WTC11 (cell line): ENCODE measurements at regions of chr22 and their contacts with region 1.

Region 1: DNA sequence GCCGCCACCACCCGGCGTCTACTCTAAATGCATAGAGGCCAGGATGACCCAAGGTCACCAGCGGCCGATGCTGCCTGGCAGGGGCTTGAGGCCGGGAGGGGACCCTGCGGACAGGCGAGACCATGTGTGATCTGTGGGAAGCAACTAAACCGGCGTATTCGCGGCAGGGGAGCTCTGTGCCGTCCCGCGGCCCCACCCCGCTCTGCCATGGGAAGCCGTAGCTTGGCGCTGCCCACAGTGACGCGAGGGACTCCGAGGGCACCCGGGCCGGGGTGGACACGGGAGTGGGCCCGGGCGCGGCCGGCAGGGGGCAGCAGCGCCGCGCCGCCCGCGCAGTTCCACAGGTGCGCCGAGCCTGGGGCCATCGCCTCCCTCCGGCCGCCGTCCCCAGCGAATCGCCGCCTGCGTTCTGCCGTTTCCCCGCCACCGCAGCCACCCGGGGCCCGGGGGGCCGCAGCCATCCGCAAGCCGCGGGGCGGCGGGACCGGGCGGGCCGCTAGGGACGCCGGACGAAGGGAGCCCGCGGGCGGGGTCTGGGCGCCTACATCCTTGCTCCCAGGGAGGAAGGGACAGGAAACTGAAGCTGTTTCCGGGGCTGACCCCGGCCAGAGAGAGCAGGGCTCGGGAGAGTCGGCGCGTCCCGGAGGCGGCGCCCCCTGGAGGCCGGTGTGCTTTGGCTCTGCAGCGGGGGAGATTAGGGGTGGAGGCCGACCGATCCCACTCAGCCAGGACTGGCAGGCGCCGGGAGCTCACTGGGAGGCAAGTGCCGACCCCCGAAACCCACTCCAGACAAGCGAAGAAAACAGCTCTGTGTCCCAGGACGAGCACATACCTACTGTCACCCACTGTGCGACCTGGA is 12.5 kb upstream of the HDHD5 start:
- DNase-seq: peak; percentile 95
- ATAC-seq: peak; percentile 85
- H3K4me3 Mint-ChIP-seq: peak overlapping the region; percentile 67
- H3K27ac Mint-ChIP-seq: peak overlapping the region; percentile 96
- H3K4me1 Mint-ChIP-seq: peaks cover 19% of the 10 kb centered on the region
- H3K27me3 Mint-ChIP-seq: peaks cover 3% of the 10 kb centered on the region; the same call in 1 of the 2 replicates
- CTCF ChIP-seq: peak; percentile 94

Region 2: DNA sequence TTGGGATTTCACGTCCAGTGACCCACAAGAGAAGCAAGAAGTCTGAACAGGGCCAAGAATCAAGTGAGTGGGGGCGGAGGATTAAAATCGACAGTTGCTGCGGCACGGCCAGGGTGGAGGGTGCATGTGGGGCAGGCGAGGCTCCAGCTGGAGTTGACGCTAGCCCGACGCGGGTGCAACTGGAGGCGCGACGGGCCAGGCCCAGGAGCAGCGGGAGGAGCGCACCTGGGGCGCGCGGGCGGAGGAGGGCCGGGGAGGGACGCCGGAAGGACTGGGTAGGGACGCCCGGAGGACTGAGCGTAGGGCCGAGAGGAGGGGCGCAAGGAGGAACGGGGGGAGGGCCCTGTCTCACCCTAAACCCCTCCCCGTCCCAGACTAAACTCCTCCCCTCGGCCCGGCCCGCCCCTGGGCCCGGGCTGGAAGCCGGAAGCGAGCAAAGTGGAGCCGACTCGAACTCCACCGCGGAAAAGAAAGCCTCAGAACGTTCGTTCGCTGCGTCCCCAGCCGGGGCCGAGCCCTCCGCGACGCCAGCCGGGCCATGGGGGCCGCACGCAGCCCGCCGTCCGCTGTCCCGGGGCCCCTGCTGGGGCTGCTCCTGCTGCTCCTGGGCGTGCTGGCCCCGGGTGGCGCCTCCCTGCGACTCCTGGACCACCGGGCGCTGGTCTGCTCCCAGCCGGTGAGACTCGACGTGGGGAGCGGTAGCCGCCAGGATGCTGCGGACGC is 86.8 kb before region 1 on chr22 and contains the start of gene IL17RA:
- CTCF ChIA-PET with region 1: interaction called, 12 read pairs
- POLR2A ChIA-PET with region 1: no interaction called
- DNase-seq: peak; percentile 93
- ATAC-seq: peak; percentile 99
- H3K4me3 Mint-ChIP-seq: peak within 1 kb of the TSS; percentile 71
- H3K27ac Mint-ChIP-seq: no peak within 1 kb of the TSS
- H3K4me1 Mint-ChIP-seq: peaks cover 25% of the 10 kb centered on the region
- H3K27me3 Mint-ChIP-seq: peaks cover 34% of the 10 kb centered on the region
- CTCF ChIP-seq: no peak
- total RNA-seq, gene IL17RA: 7.9 to 8.7 TPM (median 8.2 TPM) in 3 replicates

Region 3: DNA sequence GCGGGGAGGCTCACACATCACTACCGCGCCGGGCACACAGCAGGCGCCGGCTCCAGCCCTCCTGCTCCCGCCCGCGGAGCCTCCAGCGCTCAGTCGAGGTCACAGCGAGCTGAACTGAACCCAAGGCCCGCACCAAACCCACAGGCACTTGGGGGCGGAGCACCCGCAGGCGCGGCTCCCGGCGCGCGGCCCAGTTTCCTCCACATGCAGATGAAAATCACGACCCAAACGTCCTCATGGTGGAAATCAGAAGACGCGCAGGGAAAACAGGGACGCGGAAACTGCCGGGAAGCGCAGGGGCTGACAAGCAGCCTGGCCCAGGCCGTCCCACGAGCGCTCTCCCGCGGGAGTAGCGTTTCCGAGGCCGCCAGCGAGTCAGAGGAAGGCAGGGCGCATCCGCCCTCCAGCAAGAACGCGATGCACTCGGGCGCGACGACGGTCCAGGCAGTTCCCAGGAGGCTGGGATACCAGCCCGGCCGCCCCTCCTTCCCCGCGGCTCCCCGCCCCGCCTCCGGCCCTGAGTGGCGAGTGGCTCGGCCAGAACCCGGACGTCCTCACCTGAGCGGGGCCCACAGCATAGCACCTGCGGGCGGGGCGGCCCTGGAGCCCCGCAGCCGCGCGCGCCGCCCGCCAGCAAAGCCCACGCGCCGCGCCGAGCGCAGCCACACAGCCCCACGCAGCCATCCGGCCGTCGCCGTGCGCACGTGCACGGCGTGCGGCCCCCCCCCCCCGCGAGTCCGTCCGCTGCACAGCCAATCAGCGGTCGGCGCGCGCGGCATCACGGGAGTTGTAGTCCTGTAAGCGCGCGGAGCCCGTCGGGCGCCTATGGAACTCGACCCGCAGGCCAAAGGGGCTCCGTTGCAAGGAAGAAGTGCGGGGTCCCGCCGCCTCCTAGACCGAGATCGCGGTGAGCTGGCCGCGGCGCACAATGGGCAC is 12.7 kb before region 1 on chr22 and contains the start of gene HDHD5:
- CTCF ChIA-PET with region 1: interaction called, 108 read pairs
- POLR2A ChIA-PET with region 1: interaction called, 4 read pairs
- DNase-seq: peak; percentile 89
- ATAC-seq: peak; percentile 83
- H3K4me3 Mint-ChIP-seq: peak within 1 kb of the TSS; percentile 87
- H3K27ac Mint-ChIP-seq: peak within 1 kb of the TSS; percentile 79
- H3K4me1 Mint-ChIP-seq: peaks cover 32% of the 10 kb centered on the region
- H3K27me3 Mint-ChIP-seq: peaks cover 5% of the 10 kb centered on the region; the same call in 1 of the 2 replicates
- CTCF ChIP-seq: no peak
- total RNA-seq, gene HDHD5: 84.0 to 114 TPM (median 110 TPM) in 3 replicates

Region 4: GRCh38 chr22:17228725-17229126 is 57.2 kb after region 1 on chr22:
- CTCF ChIA-PET with region 1: interaction called, 106 read pairs
- POLR2A ChIA-PET with region 1: interaction called, 19 read pairs
- DNase-seq: no peak
- ATAC-seq: no peak
- H3K4me3 Mint-ChIP-seq: no peak overlapping the region
- H3K27ac Mint-ChIP-seq: no peak overlapping the region; the same call in 1 of the 2 replicates
- H3K4me1 Mint-ChIP-seq: peaks cover 33% of the 10 kb centered on the region
- H3K27me3 Mint-ChIP-seq: no peaks in the 10 kb centered on the region
- CTCF ChIP-seq: no peak

Region 5: GRCh38 chr22:17266251-17266971 is 94.9 kb after region 1 on chr22:
- CTCF ChIA-PET with region 1: interaction called, 80 read pairs
- POLR2A ChIA-PET with region 1: interaction called, 12 read pairs
- DNase-seq: peak; percentile 81
- ATAC-seq: peak; percentile 66
- H3K4me3 Mint-ChIP-seq: peak overlapping the region; percentile 69
- H3K27ac Mint-ChIP-seq: peak overlapping the region; percentile 96
- H3K4me1 Mint-ChIP-seq: peaks cover 90% of the 10 kb centered on the region
- H3K27me3 Mint-ChIP-seq: no peaks in the 10 kb centered on the region
- CTCF ChIP-seq: no peak

Region 6: GRCh38 chr22:17368554-17369438 is 197.3 kb after region 1 on chr22:
- CTCF ChIA-PET with region 1: interaction called, 41 read pairs
- POLR2A ChIA-PET with region 1: interaction called, 11 read pairs
- DNase-seq: peak; percentile 89
- ATAC-seq: peak; percentile 66
- H3K4me3 Mint-ChIP-seq: peak overlapping the region; percentile 78
- H3K27ac Mint-ChIP-seq: peak overlapping the region; percentile 94
- H3K4me1 Mint-ChIP-seq: peaks cover 45% of the 10 kb centered on the region
- H3K27me3 Mint-ChIP-seq: no peaks in the 10 kb centered on the region
- CTCF ChIP-seq: no peak

Region 7: GRCh38 chr22:17501679-17502285 is 330.2 kb after region 1 on chr22:
- CTCF ChIA-PET with region 1: interaction called, 52 read pairs
- POLR2A ChIA-PET with region 1: interaction called, 7 read pairs
- DNase-seq: no peak
- ATAC-seq: peak; percentile 79
- H3K4me3 Mint-ChIP-seq: no peak overlapping the region
- H3K27ac Mint-ChIP-seq: 0 out of 2 replicates have a peak overlapping the region, but pooled peaks have one; percentile 74
- H3K4me1 Mint-ChIP-seq: peaks cover 2% of the 10 kb centered on the region; the same call in 1 of the 2 replicates
- H3K27me3 Mint-ChIP-seq: no peaks in the 10 kb centered on the region
- CTCF ChIP-seq: peak; percentile 42; the same call in 1 of the 2 replicates